Activated T-helper 1 cell treated with anti-CD3 and anti-CD28 coated beads, Interleukin-12 subunit alpha, Interleukin-12 subunit beta, Interleukin-2, Interleukin-4 antibody, amounts not matched to agents 30 ng/mL and 10 ng/mL and 1 ng/mL, durations not matched to agents 14 hours and 24 hours and 36 hours (primary cell): ENCODE measurements at regions of chr3 and their contacts with region 1.

Region 1: GRCh38 chr3:32374788-32375595 is 16.7 kb upstream of the CMTM7 start:
- DNase-seq: peak; percentile 65
- H3K4me3 Mint-ChIP-seq: no peak overlapping the region
- H3K27ac Mint-ChIP-seq: peak overlapping the region; percentile 36
- H3K4me1 Mint-ChIP-seq: peaks cover 24% of the 10 kb centered on the region
- H3K27me3 Mint-ChIP-seq: no peaks in the 10 kb centered on the region

Region 2: DNA sequence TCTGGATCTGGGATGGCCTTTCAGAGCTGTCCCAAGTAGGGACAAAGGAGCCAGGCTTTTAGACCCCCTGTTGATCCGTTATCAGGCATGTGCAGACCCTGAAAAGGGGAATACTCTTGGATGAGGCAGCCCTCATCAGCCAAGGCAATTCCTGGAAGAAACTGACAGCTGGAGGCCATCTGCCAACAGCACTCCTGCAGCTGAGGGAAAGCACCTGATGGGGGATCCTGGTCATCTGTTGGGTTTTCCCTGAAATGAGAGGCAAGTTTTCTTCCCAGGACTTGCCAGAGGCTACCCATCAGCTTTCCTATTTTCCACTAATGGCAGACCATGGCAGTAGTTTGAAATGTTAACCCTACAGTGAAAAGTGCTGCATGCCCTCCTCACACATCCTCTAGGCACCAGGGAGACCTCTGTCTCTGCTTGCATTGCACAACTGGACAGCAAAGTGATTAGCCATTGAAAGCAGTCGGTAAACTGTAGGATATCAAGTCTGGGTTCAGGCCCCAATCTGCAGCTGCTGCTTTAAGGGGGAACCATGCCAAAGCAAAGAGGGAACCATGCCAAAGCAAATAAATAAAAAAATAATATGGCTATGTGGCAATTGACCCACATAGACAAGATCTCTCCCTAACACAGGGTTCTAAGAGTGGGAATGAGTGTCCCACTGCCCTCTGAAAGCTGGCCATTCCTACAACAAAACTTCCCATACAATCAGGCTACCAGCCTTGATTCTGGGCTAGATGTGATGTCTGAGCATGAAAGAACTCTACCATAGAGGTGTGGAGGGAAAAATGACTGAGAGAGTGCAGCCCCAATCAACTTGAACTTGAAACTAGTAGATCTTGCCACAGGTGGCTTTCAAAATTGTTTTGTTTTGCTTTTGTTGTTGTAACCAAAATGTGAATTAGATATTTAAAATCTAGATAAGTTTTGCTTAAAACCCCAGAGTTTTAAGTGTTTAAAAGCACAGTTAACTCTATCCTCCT is 1074.2 kb before region 1 on chr3:
- intact Hi-C with region 1: no loop called
- DNase-seq: no peak
- H3K4me3 Mint-ChIP-seq: no peak overlapping the region
- H3K27ac Mint-ChIP-seq: no peak overlapping the region
- H3K4me1 Mint-ChIP-seq: peaks cover 8% of the 10 kb centered on the region
- H3K27me3 Mint-ChIP-seq: peaks cover 3% of the 10 kb centered on the region

Region 3: DNA sequence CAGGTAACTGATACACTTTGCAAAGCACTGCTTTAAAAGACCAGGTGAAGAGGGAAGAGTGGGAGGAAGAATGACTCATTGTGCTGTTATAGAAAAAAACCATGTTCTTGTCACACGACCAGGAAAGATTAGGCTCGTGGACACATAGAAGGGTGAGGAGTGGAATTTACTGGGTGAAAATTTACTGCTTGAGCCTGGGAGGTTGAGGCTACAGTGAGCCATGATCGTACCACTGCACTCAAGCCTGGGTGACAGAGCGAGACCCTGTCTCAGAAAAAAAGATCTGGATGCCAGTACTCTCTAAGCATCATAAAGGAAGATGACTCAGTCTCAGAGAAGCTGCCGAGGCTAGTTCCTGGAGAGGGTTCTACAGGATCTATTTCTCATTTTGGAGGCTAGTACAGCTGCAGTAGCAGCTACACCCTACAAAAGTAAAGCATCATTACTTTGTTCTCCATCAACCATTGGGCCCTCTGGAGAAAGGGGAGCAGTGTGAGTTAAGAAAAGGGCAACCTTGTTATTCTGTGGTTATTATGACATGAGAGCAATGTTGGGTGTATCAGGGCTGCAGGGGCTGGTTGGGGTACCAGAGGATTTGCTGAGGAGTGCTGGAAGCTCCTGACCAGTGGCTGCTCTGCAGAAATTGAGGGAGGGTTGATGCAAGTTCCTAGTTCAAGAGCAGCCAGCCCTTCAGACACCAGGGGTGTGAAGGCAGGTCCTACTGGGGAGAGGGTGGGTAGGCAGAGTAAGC is 61.1 kb before region 1 on chr3:
- intact Hi-C with region 1: loop called (anchors 5 kb)
- DNase-seq: peak; percentile 10
- H3K4me3 Mint-ChIP-seq: peak overlapping the region; percentile 69
- H3K27ac Mint-ChIP-seq: peak overlapping the region; percentile 78
- H3K4me1 Mint-ChIP-seq: peaks cover 45% of the 10 kb centered on the region
- H3K27me3 Mint-ChIP-seq: no peaks in the 10 kb centered on the region

Region 4: GRCh38 chr3:32391643-32392535 is 16.9 kb after region 1 on chr3 and contains the start of gene CMTM7:
- intact Hi-C with region 1: loop called (anchors 1 kb)
- DNase-seq: peak; percentile 66
- H3K4me3 Mint-ChIP-seq: peak within 1 kb of the TSS; percentile 98
- H3K27ac Mint-ChIP-seq: peak within 1 kb of the TSS; percentile 98
- H3K4me1 Mint-ChIP-seq: peaks cover 61% of the 10 kb centered on the region
- H3K27me3 Mint-ChIP-seq: no peaks in the 10 kb centered on the region
- total RNA-seq, gene CMTM7: 50.6 and 59.7 TPM in 2 replicates

Region 5: DNA sequence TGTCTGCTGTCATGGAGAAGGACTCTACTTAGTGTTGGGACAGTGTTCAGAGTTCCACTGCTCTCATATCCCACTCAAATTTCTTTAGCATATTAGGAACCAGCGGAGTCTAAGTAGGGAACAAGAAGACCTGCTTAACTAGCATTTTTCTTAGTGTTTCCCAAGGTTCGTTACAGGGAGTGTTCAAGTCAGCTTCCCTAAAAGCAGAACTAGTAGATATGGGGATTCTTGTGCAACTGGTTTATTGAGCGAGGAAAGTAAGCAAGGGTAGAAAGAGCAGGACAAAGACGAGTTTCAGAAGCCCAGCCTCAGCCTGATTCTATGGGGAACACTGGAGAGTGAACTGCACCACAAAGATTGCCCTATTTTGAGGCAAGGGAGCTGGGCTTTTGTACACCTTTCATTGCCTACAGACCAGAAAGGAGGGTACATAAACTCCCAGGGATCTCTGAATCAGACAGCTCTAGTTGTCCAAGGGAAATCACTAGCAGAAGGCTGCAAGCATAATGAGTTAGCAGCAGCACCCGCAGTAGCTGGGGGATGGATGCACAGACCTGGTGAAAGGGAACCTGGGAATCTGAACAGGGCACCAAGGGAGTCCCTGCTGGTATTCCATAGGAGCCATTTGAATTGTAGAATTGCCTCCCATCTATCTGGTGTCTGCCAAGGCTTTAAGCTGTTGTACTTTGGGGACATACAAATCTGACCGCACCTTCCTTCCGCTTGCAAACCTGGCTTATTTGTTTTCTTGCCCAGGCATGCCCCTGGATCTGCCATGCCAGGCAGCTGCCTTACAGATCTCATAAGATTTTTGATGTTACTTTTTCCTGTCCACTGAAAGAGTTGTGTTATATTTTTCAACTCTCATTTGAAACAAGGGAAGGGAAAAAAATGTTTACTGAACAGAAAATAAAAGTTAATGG is 31.8 kb after region 1 on chr3:
- intact Hi-C with region 1: no loop called
- DNase-seq: no peak
- H3K4me3 Mint-ChIP-seq: no peak overlapping the region
- H3K27ac Mint-ChIP-seq: peak overlapping the region; percentile 19
- H3K4me1 Mint-ChIP-seq: peaks cover 85% of the 10 kb centered on the region
- H3K27me3 Mint-ChIP-seq: no peaks in the 10 kb centered on the region

Region 6: GRCh38 chr3:32467333-32468070 is 92.5 kb after region 1 on chr3:
- intact Hi-C with region 1: loop called (anchors 1 kb)
- DNase-seq: peak; percentile 68
- H3K4me3 Mint-ChIP-seq: no peak overlapping the region
- H3K27ac Mint-ChIP-seq: no peak overlapping the region
- H3K4me1 Mint-ChIP-seq: peaks cover 54% of the 10 kb centered on the region
- H3K27me3 Mint-ChIP-seq: no peaks in the 10 kb centered on the region

Region 7: GRCh38 chr3:32667122-32667521 is 292.1 kb after region 1 on chr3:
- intact Hi-C with region 1: loop called (anchors 2 kb)
- DNase-seq: no peak
- H3K4me3 Mint-ChIP-seq: no peak overlapping the region
- H3K27ac Mint-ChIP-seq: no peak overlapping the region
- H3K4me1 Mint-ChIP-seq: no peaks in the 10 kb centered on the region
- H3K27me3 Mint-ChIP-seq: peaks cover 15% of the 10 kb centered on the region